GM12878 (cell line): ENCODE measurements at regions of chr3 and their contacts with region 1.

Region 1: DNA sequence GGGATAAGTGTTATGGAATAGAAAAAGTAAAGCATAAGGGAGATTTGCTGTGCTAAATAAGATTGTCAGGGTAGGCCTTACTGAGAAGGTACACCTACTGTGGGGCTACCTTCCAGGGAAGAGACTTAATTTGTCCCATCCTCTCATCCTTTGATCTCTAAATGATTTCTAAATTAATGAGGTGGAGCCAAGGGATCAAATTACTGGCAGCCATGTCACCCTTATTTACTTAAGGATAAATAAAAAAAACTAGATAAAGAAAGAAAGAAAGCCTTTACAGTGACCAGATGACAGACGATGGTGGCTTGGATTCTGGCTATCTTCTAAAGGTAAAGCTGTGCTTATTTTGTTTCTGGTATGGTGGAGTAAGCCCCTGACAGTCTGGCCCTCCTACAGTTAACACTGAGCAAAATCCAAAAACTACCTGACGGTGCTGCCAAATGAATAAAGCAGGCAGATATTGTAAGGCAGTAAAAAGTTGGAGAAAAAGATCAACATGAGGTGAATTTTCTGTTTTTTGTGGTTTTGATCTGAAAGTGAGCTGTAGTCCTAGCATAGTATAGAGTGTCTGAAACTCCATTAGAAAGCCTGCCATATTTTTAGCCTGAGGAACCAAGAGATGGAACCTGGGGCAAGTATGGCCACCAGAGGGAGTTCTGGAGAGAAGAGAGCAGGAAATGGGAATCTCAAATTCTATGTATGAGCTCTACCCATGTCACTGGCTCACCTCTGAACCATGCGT is 285.1 kb upstream of the MANF start:
- DNase-seq: no peak
- ATAC-seq: peak; percentile 45
- H3K4me3 ChIP-seq: no peak overlapping the region
- H3K27ac ChIP-seq: no peak overlapping the region
- H3K4me1 ChIP-seq: no peaks in the 10 kb centered on the region
- H3K27me3 ChIP-seq: no peaks in the 10 kb centered on the region; a peak in 1 of 4 replicates
- CTCF ChIP-seq: peak; percentile 51 to 53 (median 52)
- EP300 ChIP-seq: no peak
- POLR2A ChIP-seq: no peak
- RAD21 ChIP-seq: peak; percentile 39

Region 2: DNA sequence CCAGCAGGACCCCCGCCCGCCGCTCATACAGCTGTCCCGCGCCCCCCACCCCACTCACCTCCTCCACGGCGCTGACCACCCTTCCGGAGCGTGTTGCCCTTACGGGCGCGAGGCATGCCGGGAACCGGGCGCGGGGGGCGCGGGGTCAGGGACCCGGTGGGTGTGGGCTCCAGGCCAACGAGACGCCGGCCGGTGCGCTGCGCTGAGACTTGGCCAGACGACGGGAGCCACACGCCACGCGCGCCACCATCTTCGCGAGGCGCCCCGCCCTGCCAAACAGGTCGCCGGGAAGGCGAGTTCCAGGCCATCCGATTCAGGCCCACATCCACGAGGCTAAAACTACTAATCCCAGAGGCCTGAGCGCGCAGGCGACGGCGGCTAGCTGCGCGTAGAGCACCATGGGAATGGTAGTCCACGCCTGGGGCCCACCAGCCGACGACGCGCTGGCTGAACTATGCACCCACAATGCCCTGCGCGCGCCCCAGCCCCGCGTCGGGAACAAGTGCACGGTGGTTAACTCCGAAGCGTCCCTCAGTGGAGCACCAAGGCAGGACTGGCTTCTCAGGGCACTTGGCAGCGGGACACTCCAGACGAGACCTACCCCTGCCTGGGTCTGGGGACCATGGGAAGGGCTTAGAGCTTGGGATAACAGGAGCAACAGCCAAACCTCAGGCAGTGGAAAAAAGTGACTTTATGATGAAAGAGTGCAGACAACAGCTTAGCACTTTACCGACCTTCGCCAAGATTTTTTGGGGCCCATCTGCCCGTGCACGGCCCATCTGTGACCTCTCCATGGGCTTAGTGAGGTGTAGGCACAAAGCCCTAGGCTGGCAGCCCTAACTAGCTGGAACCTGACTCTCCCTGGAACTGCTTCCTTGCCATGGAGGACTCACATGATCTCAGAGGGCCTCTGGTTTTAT is 807.5 kb before region 1 on chr3 and contains the start of gene IFRD2:
- CTCF ChIA-PET with region 1: no interaction called
- POLR2A ChIA-PET with region 1: no interaction called
- RAD21 ChIA-PET with region 1: no interaction called
- SMC1A ChIA-PET with region 1: no interaction called
- in situ Hi-C with region 1: no loop called
- intact Hi-C with region 1: no loop called
- DNase-seq: peak; percentile 92
- ATAC-seq: peak; percentile 99
- H3K4me3 ChIP-seq: peak within 1 kb of the TSS; percentile 97
- H3K27ac ChIP-seq: peak within 1 kb of the TSS; percentile 66
- H3K4me1 ChIP-seq: peaks cover 3% of the 10 kb centered on the region; the same call in 1 of the 2 replicates
- H3K27me3 ChIP-seq: no peaks in the 10 kb centered on the region
- CTCF ChIP-seq: no peak
- EP300 ChIP-seq: no peak
- POLR2A ChIP-seq: peak; percentile 89
- RAD21 ChIP-seq: no peak
- polyA plus RNA-seq, gene IFRD2: 33.7 to 82.8 TPM

Region 3: DNA sequence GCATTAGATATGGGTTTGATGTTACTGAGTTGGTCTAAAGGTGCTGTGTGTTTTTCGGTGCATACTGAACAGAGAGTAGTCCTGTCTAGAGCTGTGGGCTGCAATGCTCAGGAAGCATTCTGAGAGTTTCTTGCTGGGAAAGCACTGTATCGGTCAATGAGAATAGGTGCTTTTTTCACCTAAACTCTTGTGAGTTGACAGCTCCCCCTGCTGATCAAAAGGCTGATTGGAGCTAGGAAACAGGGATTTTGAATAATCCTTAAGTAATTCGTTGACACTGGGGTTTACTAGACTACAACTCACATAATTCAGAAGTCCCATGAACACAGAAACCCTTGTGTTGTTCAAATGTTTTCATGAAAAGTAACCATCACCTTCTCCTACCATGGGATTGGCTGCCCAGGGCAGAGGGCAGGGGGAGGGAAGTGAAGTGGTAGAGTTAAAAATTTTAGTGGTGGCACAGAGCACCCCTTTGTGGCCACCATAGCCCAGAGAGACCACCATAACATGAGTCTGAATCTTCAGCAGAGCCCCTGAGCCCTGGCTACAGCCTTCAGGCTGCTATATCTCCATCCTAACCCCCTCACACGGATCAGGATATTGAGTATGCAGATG is 272.1 kb after region 1 on chr3:
- CTCF ChIA-PET with region 1: interaction called, 9 read pairs
- POLR2A ChIA-PET with region 1: no interaction called
- RAD21 ChIA-PET with region 1: interaction called, 4 read pairs
- SMC1A ChIA-PET with region 1: no interaction called
- in situ Hi-C with region 1: no loop called
- intact Hi-C with region 1: loop called (anchors 1 kb)
- DNase-seq: no peak
- ATAC-seq: peak; percentile 85
- H3K4me3 ChIP-seq: no peak overlapping the region
- H3K27ac ChIP-seq: no peak overlapping the region
- H3K4me1 ChIP-seq: no peaks in the 10 kb centered on the region
- H3K27me3 ChIP-seq: no peaks in the 10 kb centered on the region; a peak in 1 of 4 replicates
- CTCF ChIP-seq: peak; percentile 62 to 72 (median 67)
- EP300 ChIP-seq: no peak
- POLR2A ChIP-seq: no peak
- RAD21 ChIP-seq: peak; percentile 84